Activated B cell treated with CpG ODN at 0.5 μM for 24 hours (primary cell): ENCODE measurements at regions of chr12 and their contacts with region 1.

Region 1: GRCh38 chr12:4276524-4277204 is 3.1 kb downstream of the CCND2 start:
- DNase-seq: peak; percentile 61
- ATAC-seq: peak; percentile 40
- H3K4me3 Mint-ChIP-seq: peak overlapping the region; percentile 91
- H3K27ac Mint-ChIP-seq: peak overlapping the region; percentile 26
- H3K4me1 Mint-ChIP-seq: peaks cover 34% of the 10 kb centered on the region
- H3K27me3 Mint-ChIP-seq: no peaks in the 10 kb centered on the region
- CTCF ChIP-seq: peak; percentile 48

Region 2: DNA sequence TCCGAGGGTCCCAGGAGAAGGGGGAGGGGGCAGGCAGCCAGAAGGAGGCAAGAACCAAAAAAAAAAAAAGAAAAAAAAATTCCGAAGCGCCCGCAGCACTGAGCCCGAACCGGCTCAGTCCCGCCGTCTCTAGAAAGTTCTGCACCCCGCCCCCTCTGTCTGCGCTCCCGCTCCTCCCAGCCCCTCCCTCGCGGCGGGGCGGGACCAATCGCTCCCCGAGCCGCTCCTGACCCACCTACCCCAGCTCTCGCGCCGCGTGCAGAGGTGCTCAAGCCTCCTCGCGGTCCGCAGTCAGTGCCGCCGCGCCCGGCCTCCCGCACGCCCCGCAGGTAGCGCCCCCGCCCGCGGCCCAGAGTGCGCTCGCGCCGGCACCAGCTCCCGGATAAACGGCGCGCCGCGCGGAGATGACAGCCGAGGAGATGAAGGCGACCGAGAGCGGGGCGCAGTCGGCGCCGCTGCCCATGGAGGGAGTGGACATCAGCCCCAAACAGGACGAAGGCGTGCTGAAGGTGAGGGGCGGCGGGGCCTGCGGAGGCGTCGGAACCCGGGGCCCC is 1481.9 kb before region 1 on chr12 and contains the start of gene FKBP4:
- CTCF ChIA-PET with region 1: no interaction called
- POLR2A ChIA-PET with region 1: no interaction called
- intact Hi-C with region 1: loop called (anchors 10 kb)
- DNase-seq: peak; percentile 85
- ATAC-seq: peak; percentile 89
- H3K4me3 Mint-ChIP-seq: peak within 1 kb of the TSS; percentile 89
- H3K27ac Mint-ChIP-seq: peak within 1 kb of the TSS; percentile 81
- H3K4me1 Mint-ChIP-seq: peaks cover 20% of the 10 kb centered on the region
- H3K27me3 Mint-ChIP-seq: no peaks in the 10 kb centered on the region
- CTCF ChIP-seq: no peak
- total RNA-seq, gene FKBP4: 90.5 and 94.7 TPM in 2 replicates

Region 3: DNA sequence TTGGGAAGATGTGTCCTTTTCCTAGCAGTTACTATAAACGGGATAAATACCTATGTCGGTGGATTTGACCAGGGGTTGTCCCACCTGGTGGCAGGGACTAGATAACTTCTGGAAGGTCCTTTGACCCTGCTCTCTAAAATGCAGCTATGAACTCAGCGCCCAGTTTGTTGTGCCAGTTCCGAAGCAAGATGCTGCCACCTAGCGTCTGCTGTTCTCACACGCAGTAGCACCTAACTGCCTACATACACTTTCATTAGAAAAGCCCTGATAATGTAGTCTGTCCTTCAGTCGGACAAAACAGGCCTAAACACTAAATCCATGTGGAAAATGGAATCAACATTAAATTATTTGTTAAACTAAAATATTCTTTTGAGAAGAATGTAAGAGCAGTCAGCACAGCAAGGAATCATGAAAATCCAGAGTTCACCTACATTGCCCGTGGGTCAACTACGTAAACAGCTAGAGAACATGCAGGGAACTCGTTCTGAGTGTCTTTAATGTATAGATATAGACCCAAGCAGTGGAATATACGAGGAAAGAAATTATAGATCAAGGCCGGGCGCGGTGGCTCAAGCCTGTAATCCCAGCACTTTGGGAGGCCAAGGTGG is 472.7 kb before region 1 on chr12:
- CTCF ChIA-PET with region 1: interaction called, 6 read pairs
- POLR2A ChIA-PET with region 1: interaction called, 4 read pairs
- intact Hi-C with region 1: loop called (anchors 1 kb)
- DNase-seq: peak; percentile 28
- ATAC-seq: peak; percentile 52
- H3K4me3 Mint-ChIP-seq: no peak overlapping the region
- H3K27ac Mint-ChIP-seq: no peak overlapping the region
- H3K4me1 Mint-ChIP-seq: no peaks in the 10 kb centered on the region
- H3K27me3 Mint-ChIP-seq: no peaks in the 10 kb centered on the region
- CTCF ChIP-seq: no peak

Region 4: DNA sequence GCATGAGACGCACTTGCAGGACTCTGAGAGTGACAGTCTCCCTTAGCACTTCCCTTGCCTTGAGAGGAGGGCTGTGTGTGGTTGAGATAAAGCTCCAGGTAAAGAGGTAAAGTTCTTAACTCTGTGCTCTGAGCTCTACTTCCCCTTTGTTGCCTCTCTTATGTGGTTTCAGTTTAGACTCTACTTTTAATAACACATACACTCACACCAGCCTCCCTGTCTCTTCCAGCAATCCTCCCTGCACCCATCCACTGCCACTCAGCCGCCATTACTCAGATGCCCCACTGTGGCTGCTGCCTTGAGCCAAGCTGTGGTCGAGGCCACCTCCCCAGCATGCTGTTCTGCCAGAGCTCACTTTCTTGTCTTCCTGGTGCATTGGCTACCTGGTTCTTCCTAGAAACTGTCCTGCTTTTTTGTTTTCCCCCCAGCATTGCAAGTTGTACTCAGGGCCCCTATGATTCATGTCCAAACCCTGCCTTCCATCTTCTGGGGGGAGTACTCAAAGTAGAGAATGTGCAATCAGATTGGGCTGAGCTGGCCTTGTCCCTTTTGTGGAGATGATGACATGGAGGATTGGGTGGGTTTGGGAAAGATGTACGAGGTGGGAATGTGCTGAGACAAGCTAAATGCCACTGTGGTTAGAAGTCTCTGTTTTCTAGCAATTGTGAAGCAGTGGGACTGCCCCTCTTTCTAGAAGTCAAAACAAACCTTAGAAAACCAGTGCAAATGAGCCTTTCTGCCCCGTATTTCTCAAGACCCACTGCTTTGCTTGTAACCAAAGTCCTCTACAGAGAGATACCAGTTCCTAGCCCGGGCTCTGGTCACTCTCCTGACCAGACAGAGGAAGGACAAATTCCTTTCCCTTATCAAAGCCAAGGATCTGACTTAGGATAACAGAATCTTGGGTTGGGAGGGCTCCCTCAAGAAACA is 287.9 kb before region 1 on chr12:
- CTCF ChIA-PET with region 1: interaction called, 206 read pairs
- POLR2A ChIA-PET with region 1: interaction called, 6 read pairs
- intact Hi-C with region 1: no loop called
- DNase-seq: no peak
- ATAC-seq: peak; percentile 77
- H3K4me3 Mint-ChIP-seq: no peak overlapping the region
- H3K27ac Mint-ChIP-seq: peak overlapping the region; percentile 54
- H3K4me1 Mint-ChIP-seq: peaks cover 15% of the 10 kb centered on the region
- H3K27me3 Mint-ChIP-seq: no peaks in the 10 kb centered on the region
- CTCF ChIP-seq: no peak

Region 5: DNA sequence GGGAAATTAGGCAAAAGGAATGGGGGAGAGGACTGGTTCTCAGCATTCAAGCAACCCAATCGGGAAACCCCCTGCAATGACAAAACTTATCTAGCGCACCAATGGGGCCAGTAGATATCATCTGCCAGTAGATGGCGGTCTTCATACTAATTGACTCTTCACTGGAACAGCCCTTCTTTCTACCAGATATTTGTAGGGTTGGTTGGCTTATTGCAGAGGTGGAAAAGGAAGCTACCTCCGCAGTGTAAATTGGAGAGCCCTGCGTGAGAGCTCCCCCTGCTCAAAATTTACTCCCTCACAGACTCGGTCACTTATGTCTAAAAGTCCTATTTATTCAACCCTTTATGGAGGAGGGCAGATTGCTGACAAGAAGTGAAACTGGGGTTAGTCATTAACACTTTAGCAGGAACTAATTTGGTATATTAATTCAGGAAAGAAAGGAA is 169.2 kb before region 1 on chr12:
- CTCF ChIA-PET with region 1: interaction called, 100 read pairs
- POLR2A ChIA-PET with region 1: interaction called, 72 read pairs
- intact Hi-C with region 1: loop called (anchors 1 kb)
- DNase-seq: peak; percentile 33
- ATAC-seq: peak; percentile 98
- H3K4me3 Mint-ChIP-seq: peak overlapping the region; percentile 45
- H3K27ac Mint-ChIP-seq: peak overlapping the region; percentile 64
- H3K4me1 Mint-ChIP-seq: peaks cover 19% of the 10 kb centered on the region
- H3K27me3 Mint-ChIP-seq: peaks cover 5% of the 10 kb centered on the region
- CTCF ChIP-seq: peak; percentile 34

Region 6: GRCh38 chr12:4164559-4165558 is 111.8 kb before region 1 on chr12:
- CTCF ChIA-PET with region 1: interaction called, 11 read pairs
- POLR2A ChIA-PET with region 1: interaction called, 199 read pairs
- intact Hi-C with region 1: no loop called
- DNase-seq: peak; percentile 60
- ATAC-seq: peak; percentile 75
- H3K4me3 Mint-ChIP-seq: peak overlapping the region; percentile 89
- H3K27ac Mint-ChIP-seq: peak overlapping the region; percentile 95
- H3K4me1 Mint-ChIP-seq: peaks cover 42% of the 10 kb centered on the region
- H3K27me3 Mint-ChIP-seq: no peaks in the 10 kb centered on the region
- CTCF ChIP-seq: no peak

Region 7: DNA sequence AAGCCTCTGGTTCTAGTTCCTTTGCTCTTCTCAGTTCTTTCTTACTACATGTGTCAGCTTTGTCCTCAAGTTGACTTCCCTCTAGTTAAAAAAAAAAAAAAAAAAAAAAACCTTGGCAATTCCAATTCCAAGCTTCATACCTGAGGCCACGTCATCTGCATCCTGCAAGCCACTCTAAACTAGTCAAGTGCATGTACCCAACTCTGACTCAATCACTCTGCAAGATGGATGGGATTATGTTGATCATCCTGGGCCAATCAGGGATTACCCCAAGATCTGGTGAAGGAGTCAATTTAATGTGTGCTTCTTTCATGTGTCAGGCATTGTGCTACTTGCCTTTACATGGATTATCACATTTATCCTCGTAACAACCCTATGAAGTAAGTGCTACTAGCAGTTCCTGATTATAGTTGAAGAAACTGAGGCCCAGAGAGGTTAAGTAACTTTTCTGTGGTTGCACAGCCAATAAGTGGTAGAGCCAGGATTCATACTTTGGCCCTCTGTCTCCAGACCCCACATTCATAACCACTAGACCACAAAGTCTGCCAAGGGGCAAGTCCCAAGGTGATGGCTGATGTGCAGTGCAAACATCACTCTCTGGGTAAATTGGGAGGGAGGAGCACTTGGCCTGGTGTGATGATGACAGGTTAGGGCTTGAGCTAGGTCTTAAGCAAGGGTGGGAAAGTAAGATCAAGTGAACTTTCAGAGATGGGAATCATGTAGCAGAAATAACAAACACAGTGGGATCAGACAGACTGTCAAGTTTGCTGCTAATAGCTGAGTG is 20.4 kb before region 1 on chr12:
- CTCF ChIA-PET with region 1: interaction called, 5 read pairs
- POLR2A ChIA-PET with region 1: interaction called, 12 read pairs
- intact Hi-C with region 1: no loop called
- DNase-seq: no peak
- ATAC-seq: no peak
- H3K4me3 Mint-ChIP-seq: no peak overlapping the region
- H3K27ac Mint-ChIP-seq: no peak overlapping the region
- H3K4me1 Mint-ChIP-seq: peaks cover 8% of the 10 kb centered on the region
- H3K27me3 Mint-ChIP-seq: peaks cover 4% of the 10 kb centered on the region
- CTCF ChIP-seq: no peak